Mammary epithelial cell (primary cell): ENCODE measurements at regions of chr5 and their contacts with region 1.

Region 1: DNA sequence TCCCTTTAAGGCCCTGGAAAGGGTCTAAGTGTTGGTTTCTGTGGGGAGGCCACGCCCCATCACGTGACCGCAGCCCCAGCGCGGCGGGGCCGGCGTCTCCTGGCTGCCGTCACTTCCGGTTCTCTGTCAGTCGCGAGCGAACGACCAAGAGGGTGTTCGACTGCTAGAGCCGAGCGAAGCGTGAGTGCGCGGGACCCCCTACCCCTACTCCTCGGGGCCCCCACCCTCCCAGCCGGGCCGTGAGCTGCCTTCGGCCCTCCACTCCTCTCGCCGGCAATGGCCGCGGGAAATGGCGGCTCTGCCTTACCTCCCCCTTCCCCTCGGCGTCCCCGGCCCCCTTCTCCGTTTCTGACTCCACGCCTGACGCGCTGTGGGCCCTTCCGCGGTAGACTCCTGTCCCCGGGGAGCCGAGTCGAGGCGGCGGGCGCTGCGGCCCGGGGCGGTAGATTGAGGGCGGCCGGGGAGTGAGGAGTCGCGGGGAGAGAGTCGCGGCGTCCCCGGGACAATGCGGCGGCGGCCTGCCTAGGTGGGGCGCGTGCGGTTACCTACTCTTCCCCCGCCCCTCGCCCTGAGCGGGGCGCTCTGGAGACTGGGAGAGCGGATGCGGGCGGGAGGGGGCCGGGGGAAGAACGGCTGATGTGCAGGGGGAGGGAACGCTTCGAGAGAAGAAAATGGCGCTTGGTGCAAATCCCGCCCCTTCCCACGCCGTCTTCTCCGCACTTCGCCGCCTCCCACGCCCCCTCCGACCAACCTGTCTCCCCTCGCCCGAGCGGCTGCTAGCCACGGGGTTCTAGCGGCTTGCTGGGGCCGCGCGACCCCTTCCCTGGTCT is at the start of gene SUB1:
- DNase-seq: peak; percentile 85
- H3K4me3 ChIP-seq: peak within 1 kb of the TSS; percentile 89 to 97 (median 93)
- H3K27ac ChIP-seq: peak within 1 kb of the TSS; percentile 81
- H3K4me1 ChIP-seq: peaks cover 20% of the 10 kb centered on the region
- H3K27me3 ChIP-seq: no peaks in the 10 kb centered on the region
- CTCF ChIP-seq: peak in 1 of 2 donors; percentile 19
- total RNA-seq, gene SUB1: 109 to 231 TPM

Region 2: GRCh38 chr5:32390819-32391591 is 194.7 kb before region 1 on chr5:
- CTCF ChIA-PET with region 1: no interaction called
- dilution Hi-C with region 1: no loop called
- in situ Hi-C with region 1: no loop called
- intact Hi-C with region 1: loop called (anchors 5 kb)
- DNase-seq: peak; percentile 88
- H3K4me3 ChIP-seq: no peak overlapping the region
- H3K27ac ChIP-seq: peak overlapping the region; percentile 75
- H3K4me1 ChIP-seq: peaks cover 12% of the 10 kb centered on the region
- H3K27me3 ChIP-seq: no peaks in the 10 kb centered on the region
- CTCF ChIP-seq: no peak

Region 3: DNA sequence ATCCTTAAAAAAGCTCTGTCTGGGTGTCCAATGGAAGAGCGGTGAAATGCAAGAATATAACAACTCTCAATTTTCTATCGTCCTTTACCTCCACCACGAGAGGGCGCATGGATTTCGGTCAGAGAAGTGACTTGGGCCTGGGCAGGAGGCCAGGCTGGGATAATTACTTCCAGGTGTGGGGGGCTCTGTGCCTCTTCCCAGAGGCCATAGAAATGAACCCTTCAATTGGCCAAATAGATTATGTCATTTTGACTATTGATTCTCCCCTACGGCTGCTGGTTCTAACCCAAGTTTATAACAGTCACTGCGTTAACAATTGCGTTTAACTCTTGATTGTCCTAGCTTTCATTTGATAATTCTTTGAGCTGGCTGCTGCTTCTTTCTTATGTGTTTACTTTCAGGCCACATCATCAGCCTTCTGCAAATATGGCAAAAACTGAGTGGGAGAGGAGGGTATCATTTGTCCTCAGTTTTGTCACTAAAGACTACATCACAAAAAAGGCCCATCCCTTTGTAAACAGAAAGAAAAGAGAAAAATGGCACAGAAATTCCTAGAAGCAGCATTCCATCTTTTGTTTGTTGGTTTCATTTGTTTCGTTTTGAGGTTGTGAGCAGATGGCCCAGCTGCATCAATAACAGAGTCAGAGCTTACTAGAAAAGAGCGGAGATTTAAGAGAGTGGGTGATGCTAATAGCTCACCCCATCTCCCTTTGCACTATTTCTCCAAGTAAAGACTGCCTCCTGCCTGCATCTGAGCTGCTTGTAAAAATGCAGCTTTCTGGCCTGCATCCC is 95.7 kb before region 1 on chr5:
- CTCF ChIA-PET with region 1: interaction called, 18 read pairs
- dilution Hi-C with region 1: no loop called
- in situ Hi-C with region 1: loop called in 1 of 2 experiments (anchors 10 kb)
- intact Hi-C with region 1: loop called (anchors 1 kb)
- DNase-seq: peak; percentile 33
- H3K4me3 ChIP-seq: no peak overlapping the region
- H3K27ac ChIP-seq: no peak overlapping the region
- H3K4me1 ChIP-seq: no peaks in the 10 kb centered on the region
- H3K27me3 ChIP-seq: no peaks in the 10 kb centered on the region
- CTCF ChIP-seq: peak; percentile 67 to 72